Endothelial cell of umbilical vein (primary cell): ENCODE measurements at regions of chr1 and their contacts with region 1.

Region 1: DNA sequence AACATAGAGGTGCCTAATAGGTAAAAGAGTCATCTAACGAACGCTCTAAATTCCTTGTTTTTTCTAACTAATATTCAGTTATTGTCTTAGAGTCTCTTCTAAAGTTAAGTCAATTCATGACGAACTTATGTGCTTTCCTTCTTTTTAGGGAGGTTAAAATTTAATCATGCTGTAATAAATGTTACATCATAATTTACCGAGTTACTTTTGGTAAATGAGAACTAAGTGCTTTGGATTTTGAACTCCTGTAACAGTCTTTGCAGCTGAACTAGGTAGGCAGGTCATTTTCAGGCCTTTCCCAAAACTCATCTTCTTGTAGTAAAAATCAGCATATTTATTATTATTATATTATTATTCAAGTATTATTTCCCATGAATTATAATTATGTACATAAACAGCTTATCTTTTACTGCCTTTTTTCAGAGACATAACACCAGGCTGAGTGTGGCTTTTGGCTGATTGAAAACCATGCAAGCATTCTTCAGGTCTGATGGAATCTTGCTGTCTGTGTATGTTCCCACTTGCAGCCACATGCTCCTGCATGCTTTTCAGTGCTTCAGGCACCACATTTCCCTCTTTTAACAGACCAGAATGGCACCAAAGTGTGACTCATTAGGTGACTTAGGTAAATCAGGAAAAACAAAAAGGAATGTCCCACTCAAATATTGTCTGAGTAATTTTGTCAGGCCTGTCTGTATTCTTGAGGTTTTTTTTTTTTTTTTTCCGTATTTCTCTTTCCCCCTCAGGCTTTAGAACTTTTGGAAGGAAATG is 81.0 kb upstream of the CD55 start:
- DNase-seq: peak; percentile 59
- H3K4me3 ChIP-seq: no peak overlapping the region
- H3K27ac ChIP-seq: no peak overlapping the region
- H3K4me1 ChIP-seq: peaks cover 18% of the 10 kb centered on the region
- H3K27me3 ChIP-seq: no peaks in the 10 kb centered on the region
- CTCF ChIP-seq: no peak
- POLR2A ChIP-seq: no peak

Region 2: DNA sequence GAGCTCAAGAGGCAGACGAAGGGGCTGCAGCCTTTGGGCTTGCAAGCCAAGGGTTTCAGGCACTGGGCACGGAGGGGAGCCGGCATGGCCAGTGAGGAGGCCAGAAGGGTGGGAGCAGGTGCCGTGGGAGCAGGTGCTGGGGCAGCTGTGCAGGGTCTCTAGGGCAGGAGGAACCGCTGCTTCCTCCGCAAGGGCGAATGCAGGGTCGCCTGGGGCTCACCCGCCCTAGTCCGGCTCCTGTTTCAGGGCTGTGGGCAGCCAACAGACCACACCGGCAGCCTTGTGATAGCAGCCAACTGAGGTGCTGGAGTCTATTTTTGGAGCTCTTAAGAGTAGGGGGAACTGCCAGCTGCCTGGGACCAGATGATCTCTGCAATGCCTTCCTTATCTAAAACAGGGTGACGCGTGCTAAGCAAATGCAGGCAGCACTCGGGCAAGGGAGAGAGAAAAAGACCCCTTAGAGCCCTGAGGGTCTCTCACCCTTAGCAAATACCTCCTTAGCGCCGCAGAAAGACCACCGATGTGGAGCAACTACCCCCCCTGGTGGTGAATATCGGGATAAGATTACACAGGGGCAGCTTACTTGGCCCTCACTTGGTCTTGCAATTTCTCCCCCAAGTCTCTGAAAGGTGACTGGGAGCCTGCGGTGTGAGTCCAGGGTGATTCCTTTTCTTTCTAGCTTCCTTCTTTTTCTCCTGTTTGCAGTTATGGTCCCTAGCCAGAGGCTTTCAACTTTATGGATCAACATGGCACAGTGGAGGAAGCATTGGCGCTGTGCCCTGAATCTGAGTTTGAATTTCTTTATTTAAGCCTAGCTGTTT is 576.5 kb before region 1 on chr1:
- CTCF ChIA-PET with region 1: no interaction called
- POLR2A ChIA-PET with region 1: no interaction called
- dilution Hi-C with region 1: no loop called
- intact Hi-C with region 1: no loop called
- DNase-seq: peak; percentile 76
- H3K4me3 ChIP-seq: no peak overlapping the region
- H3K27ac ChIP-seq: no peak overlapping the region
- H3K4me1 ChIP-seq: no peaks in the 10 kb centered on the region
- H3K27me3 ChIP-seq: peaks cover 36 to 38% of the 10 kb centered on the region in 2 experiments
- CTCF ChIP-seq: peak; percentile 65 to 78
- POLR2A ChIP-seq: no peak

Region 3: GRCh38 chr1:207227131-207227630 is 13.3 kb before region 1 on chr1:
- CTCF ChIA-PET with region 1: interaction called, 5 read pairs
- POLR2A ChIA-PET with region 1: no interaction called
- dilution Hi-C with region 1: no loop called
- intact Hi-C with region 1: loop called (anchors 2 kb)
- DNase-seq: peak; percentile 69
- H3K4me3 ChIP-seq: no peak overlapping the region
- H3K27ac ChIP-seq: no peak overlapping the region
- H3K4me1 ChIP-seq: peaks cover 5% of the 10 kb centered on the region
- H3K27me3 ChIP-seq: no peaks in the 10 kb centered on the region
- CTCF ChIP-seq: no peak
- POLR2A ChIP-seq: no peak

Region 4: GRCh38 chr1:207519505-207520404 is 279.2 kb after region 1 on chr1:
- CTCF ChIA-PET with region 1: no interaction called
- POLR2A ChIA-PET with region 1: no interaction called
- dilution Hi-C with region 1: no loop called
- intact Hi-C with region 1: no loop called
- DNase-seq: no peak
- H3K4me3 ChIP-seq: no peak overlapping the region
- H3K27ac ChIP-seq: no peak overlapping the region
- H3K4me1 ChIP-seq: no peaks in the 10 kb centered on the region
- H3K27me3 ChIP-seq: peaks cover 0 to 7% of the 10 kb centered on the region in 2 experiments
- CTCF ChIP-seq: no peak
- POLR2A ChIP-seq: no peak